ENCODE measurements at regions of chr4 and their contacts with region 1.

Region 1: DNA sequence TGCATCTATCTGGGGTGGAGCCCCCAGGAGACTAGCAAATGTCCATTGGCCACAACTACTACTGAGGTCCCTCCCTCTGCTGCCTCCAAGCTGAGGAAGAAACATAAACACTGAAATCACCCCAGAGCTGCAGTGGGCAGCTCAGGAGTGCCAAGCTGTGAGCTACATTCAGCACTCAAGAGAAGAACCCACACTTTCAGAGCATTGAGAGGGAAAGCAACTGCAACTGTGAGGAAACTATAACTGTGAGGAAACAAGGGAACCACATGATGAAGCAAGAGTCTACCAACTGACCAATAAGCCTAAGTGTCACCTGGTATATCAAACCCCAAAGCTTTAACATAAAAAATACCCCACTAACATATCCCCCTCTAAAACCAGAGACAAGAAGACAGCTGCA is 373.5 kb upstream of the TACR3 start:
- DNase-seq: no peak
- H3K4me3 ChIP-seq: no peak overlapping the region
- H3K27ac ChIP-seq: no peak overlapping the region
- H3K4me1 ChIP-seq: no peaks in the 10 kb centered on the region
- H3K27me3 ChIP-seq: no peaks in the 10 kb centered on the region
- CTCF ChIP-seq: no peak

Region 2: DNA sequence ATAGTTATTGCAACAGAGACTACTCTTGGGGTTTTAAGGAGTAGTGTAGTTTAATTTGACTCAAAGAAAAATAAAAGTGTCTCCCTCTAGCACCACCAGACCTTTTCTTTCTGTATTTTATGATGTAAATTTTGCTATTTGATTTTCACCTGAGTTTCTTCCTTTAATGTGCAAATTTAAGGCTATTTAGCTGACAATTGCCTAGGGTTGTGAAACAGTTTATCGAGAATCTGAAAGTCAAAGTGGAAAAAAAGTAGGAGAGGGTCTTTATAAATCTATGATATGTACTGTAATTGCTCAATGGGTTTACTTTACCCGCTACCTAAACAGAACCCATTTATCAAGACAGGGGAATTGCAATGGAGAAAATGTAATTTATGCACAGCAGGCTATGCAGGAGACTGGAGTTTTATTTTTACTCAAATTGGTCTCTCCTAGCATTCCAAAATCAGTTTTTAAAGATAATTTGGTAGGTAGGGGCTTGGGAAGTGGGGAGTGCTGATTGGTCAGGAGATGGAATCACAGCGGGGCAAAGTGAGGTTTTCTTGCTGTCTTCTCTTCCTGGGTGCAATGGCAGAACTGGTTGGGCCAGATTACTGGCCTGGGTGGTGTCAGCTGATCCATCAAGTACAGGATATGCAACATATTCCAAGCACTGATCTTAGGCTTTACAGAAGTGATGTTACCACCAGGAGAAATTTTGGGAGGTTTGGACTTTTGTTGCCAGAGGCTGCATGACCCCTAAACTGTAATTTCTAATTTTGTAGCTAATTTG is 144.8 kb before region 1 on chr4:
- CTCF ChIA-PET with region 1: no interaction called
- POLR2A ChIA-PET with region 1: no interaction called
- intact Hi-C with region 1: no loop called
- DNase-seq: peak in 1 of 2 experiments; percentile 16
- H3K4me3 ChIP-seq: no peak overlapping the region
- H3K27ac ChIP-seq: no peak overlapping the region
- H3K4me1 ChIP-seq: no peaks in the 10 kb centered on the region
- H3K27me3 ChIP-seq: no peaks in the 10 kb centered on the region
- CTCF ChIP-seq: no peak

Region 3: GRCh38 chr4:105093975-105094374 is 1000.7 kb after region 1 on chr4:
- CTCF ChIA-PET with region 1: no interaction called
- POLR2A ChIA-PET with region 1: interaction called, 16 read pairs
- intact Hi-C with region 1: no loop called
- DNase-seq: no peak
- H3K4me3 ChIP-seq: no peak overlapping the region
- H3K27ac ChIP-seq: no peak overlapping the region
- H3K4me1 ChIP-seq: no peaks in the 10 kb centered on the region
- H3K27me3 ChIP-seq: no peaks in the 10 kb centered on the region
- CTCF ChIP-seq: no peak

Measured in PC-9 (cell line).